AG04450 (cell line): ENCODE measurements at regions of chr14 and their contacts with region 1.

Region 1: DNA sequence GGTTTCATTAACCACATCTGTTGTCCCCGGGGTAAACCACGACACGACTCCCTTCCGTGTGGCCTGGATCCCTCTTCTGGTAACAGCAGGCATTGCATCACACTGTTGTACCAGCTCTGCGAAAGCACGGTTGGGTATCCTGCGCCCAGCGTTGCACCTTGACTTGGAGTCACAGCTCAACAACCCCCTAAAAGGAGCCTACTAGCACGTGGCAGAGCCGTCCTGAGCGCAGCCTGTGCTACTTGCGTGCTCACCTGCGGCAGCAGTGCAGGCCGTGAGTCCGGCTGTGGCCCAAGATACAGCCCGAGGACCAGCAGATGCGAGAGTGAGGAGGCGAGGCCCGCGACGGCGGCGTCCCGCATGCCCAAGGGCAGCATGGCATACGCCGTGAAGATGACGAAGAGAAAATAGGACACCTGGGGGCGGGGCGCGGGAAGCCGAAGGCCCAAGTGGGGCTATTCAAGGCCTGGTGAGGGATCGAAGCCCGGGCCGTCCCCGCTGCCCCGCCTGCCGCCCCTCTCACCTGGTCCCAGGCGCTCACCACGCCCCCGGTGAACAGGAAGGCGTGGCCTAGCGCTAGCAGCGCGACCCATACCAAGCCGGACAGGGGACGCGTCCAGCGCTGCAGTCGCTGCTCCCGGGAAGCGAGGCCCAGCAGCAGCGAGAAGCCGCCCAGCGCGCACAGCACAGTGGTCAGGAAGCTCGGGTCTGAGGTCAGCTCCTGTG is 2.4 kb downstream of the ADCY4 start:
- DNase-seq: no peak
- H3K4me3 ChIP-seq: peak overlapping the region; percentile 40
- H3K27ac ChIP-seq: no peak overlapping the region
- H3K27me3 ChIP-seq: peaks cover 49% of the 10 kb centered on the region
- CTCF ChIP-seq: peak; percentile 76

Region 2: GRCh38 chr14:24317141-24317928 is 15.1 kb before region 1 on chr14:
- CTCF ChIA-PET with region 1: interaction called, 18 read pairs
- POLR2A ChIA-PET with region 1: no interaction called
- DNase-seq: no peak
- H3K4me3 ChIP-seq: no peak overlapping the region
- H3K27ac ChIP-seq: no peak overlapping the region
- H3K27me3 ChIP-seq: peaks cover 19% of the 10 kb centered on the region
- CTCF ChIP-seq: no peak

Region 3: DNA sequence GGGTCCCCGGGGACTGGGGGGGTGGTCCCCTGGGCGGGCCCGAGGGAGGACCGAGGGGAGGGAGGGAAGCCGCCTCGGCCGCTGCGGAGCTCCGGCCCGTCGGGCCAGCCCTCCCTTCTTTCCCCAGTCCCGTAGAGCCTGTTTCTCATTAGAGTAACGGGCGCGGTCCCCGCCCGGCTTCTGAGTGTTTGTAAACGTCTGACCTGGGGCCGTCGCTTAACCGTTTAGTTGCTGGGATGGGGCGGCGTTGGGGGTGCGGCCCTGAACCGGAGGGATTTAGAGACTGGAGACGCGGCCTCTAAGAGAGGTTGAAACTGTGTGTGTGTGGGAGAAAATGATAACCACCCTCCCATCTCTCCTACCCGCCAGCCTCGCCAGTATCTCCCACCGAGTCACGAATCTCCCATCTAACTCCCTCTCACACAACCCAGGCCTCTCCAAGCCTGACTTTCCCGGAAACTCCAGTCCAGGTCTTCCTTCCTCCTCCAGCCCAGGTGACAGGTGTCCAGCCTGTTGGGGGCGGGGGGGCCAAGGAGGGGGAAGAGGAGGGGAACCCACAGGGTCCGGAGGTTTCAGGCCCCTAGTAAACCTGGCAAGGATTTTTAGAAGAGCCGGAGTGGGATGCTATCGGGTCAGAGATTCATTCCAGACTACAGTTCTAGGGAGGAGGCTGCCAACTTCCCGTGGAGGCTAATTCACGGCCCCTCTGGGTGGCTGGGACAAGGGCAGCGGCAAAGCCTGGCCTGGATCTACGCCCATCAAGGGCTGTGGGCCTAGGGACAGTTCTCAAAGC is 34.5 kb after region 1 on chr14:
- CTCF ChIA-PET with region 1: interaction called, 65 read pairs
- POLR2A ChIA-PET with region 1: interaction called, 6 read pairs
- DNase-seq: peak; percentile 83
- H3K4me3 ChIP-seq: peak overlapping the region; percentile 46
- H3K27ac ChIP-seq: peak overlapping the region; percentile 96
- H3K27me3 ChIP-seq: no peaks in the 10 kb centered on the region
- CTCF ChIP-seq: no peak

Region 4: GRCh38 chr14:24398653-24399446 is 66.4 kb after region 1 on chr14 and contains the start of gene NYNRIN:
- CTCF ChIA-PET with region 1: interaction called, 19 read pairs
- POLR2A ChIA-PET with region 1: no interaction called
- DNase-seq: no peak
- H3K4me3 ChIP-seq: peak within 1 kb of the TSS; percentile 66
- H3K27ac ChIP-seq: no peak within 1 kb of the TSS
- H3K27me3 ChIP-seq: no peaks in the 10 kb centered on the region
- CTCF ChIP-seq: no peak
- polyA plus RNA-seq, gene NYNRIN: 10.4 and 10.5 TPM in 2 replicates

Region 5: DNA sequence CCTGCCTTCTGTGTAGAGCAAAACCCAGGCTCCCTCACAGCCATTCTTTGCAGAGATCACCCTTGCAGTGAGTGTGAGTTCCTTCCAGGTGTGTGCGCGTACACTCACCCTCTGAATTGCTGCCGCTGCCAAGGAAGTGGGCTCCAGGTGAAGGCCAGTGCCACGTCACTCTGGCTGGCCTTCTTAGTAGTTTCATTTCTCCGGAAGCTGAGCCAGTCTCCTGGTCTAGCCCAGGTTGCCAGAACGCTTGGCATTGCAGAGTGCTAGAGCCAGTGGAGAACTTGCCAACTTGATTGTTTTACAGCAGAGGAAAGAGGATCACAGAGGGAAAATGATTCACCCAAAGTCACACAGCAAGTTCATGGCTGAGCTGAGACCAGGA is 86.1 kb after region 1 on chr14:
- CTCF ChIA-PET with region 1: interaction called, 49 read pairs
- POLR2A ChIA-PET with region 1: interaction called, 3 read pairs
- DNase-seq: no peak
- H3K4me3 ChIP-seq: no peak overlapping the region
- H3K27ac ChIP-seq: no peak overlapping the region
- H3K27me3 ChIP-seq: peaks cover 29% of the 10 kb centered on the region
- CTCF ChIP-seq: no peak

Region 6: GRCh38 chr14:24442273-24443052 is 110.0 kb after region 1 on chr14 and contains the start of gene SDR39U1:
- CTCF ChIA-PET with region 1: interaction called, 712 read pairs
- POLR2A ChIA-PET with region 1: interaction called, 13 read pairs
- DNase-seq: peak; percentile 98
- H3K4me3 ChIP-seq: peak within 1 kb of the TSS; percentile 94
- H3K27ac ChIP-seq: peak within 1 kb of the TSS; percentile 100
- H3K27me3 ChIP-seq: no peaks in the 10 kb centered on the region
- CTCF ChIP-seq: no peak
- polyA plus RNA-seq, gene SDR39U1: 22.9 and 24.9 TPM in 2 replicates